H1 (cell line): ENCODE measurements at regions of chr7 and their contacts with region 1.

Region 1: DNA sequence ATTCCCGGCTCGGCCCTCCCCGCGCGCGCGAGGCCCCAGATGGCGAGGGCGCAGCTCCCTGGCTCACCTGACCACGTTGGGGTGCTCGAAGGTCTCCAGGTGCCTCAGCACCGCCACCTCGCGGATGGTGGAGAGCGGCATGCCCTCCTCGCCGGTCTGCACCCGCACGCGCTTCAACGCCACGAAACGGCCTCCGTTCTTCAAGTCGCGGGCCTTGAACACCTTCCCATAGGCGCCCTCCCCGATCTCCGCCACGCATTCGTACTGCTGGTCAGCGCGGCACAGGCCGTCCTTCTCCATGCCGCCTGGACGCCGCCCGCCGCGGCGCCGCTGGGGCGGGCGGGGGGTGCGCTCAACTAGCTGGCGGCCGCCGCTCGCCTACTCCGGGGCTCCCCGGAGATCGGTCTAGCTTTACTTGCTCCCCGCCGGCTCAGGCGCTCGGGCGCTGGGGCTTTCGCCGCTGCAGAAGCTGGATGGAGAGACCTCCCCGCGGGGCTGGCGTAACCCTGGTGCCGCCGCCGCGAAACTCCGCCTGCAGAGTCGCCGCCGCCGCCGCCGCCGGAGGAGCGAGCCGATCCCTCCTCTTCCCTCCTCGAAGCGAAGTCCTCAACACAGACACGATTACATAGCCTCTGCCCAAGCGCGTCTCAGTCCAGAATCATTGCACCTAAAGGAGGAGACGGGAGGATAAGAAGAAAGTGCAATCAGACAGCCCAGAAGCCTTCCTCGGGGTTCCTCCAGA is 3.2 kb downstream of the CDK6 start:
- DNase-seq: peak; percentile 73 to 95
- H3K4me3 ChIP-seq: peak overlapping the region; percentile 38 to 81 (median 58)
- H3K27ac ChIP-seq: no peak overlapping the region
- H3K4me1 ChIP-seq: peaks cover 0 to 5% (median 2%) of the 10 kb centered on the region in 4 experiments; a peak in 2 of 7 replicates
- H3K27me3 ChIP-seq: peaks cover 0 to 12% (median 6%) of the 10 kb centered on the region in 4 experiments; a peak in 5 of 7 replicates
- CTCF ChIP-seq: peak; percentile 92 to 96 (median 92)
- EP300 ChIP-seq: 0 out of 3 replicates have a peak, but pooled peaks of 1 of the 2 experiments have one; percentile 5
- POLR2A ChIP-seq: no peak
- RAD21 ChIP-seq: peak; percentile 83 to 88

Region 2: DNA sequence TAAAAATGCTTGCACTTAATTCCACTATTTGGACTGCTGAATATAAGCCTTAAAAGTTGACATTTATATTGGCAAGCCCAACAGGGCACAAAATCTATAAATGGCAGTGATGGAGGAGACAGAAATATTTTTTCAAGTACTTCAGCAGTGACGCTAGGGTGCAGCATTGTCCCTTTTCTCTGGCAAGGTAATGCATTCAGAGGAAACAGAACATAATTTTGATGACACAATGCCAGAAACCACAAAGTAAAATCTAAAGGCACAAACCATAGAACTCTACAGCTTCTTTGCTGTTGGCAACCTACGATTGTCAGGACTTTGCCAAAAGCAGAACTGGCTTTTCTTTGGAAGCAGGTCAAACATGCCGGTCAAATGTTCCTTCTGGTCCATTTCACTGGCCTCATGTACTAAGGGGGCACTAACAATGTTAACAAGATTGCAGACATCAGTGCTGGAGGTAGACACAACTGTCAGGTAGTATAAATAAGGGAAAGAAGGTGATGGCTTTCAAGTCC is 212.1 kb before region 1 on chr7:
- CTCF ChIA-PET with region 1: interaction called, 23 read pairs
- POLR2A ChIA-PET with region 1: interaction called, 3 read pairs
- DNase-seq: peak in 1 of 2 experiments; percentile 56
- H3K4me3 ChIP-seq: no peak overlapping the region
- H3K27ac ChIP-seq: no peak overlapping the region
- H3K4me1 ChIP-seq: no peaks in the 10 kb centered on the region
- H3K27me3 ChIP-seq: no peaks in the 10 kb centered on the region
- CTCF ChIP-seq: peak in 2 of 3 experiments; percentile 62 to 72; a peak in 3 of 4 replicates
- EP300 ChIP-seq: no peak
- POLR2A ChIP-seq: no peak
- RAD21 ChIP-seq: peak; percentile 88 to 91

Region 3: GRCh38 chr7:92691578-92691977 is 141.6 kb before region 1 on chr7:
- CTCF ChIA-PET with region 1: interaction called, 17 read pairs
- POLR2A ChIA-PET with region 1: interaction called, 8 read pairs
- DNase-seq: no peak
- H3K4me3 ChIP-seq: no peak overlapping the region
- H3K27ac ChIP-seq: no peak overlapping the region
- H3K4me1 ChIP-seq: peaks cover 0 to 6% (median 2%) of the 10 kb centered on the region in 4 experiments; a peak in 3 of 7 replicates
- H3K27me3 ChIP-seq: no peaks in the 10 kb centered on the region; a peak in 2 of 7 replicates
- CTCF ChIP-seq: peak in 2 of 3 experiments; percentile 38 to 50; a peak in 2 of 4 replicates
- EP300 ChIP-seq: no peak
- POLR2A ChIP-seq: no peak
- RAD21 ChIP-seq: peak; percentile 70 to 71

Region 4: DNA sequence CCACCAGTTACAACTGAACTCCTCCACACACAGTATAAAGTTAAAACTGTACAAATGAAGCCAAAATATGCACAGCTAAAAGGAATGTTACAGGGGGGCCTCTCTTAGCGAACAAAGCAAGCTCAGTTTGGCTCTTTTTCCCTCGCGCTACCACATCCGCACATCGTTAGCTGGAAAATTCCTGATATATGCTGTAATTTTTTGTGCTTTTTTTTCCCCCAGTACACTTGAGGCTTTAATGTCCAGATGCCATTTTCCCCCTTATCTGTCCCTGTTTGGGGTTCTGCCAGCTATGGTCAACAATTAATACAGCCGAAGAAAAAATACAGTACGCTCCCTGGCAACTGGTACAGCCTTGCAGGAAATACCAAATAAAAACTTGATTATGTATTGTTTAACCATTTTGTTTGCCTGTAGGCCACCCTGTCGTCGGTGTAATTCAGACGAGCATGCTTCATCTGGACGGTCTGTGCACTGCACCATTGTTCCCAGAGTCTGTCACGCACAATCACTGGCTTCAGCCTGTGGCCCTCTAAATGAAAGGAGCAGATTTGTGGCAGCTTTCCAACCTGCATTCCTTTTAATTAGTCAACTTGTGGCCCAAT is 134.9 kb before region 1 on chr7:
- CTCF ChIA-PET with region 1: interaction called, 17 read pairs
- POLR2A ChIA-PET with region 1: interaction called, 8 read pairs
- DNase-seq: no peak
- H3K4me3 ChIP-seq: no peak overlapping the region
- H3K27ac ChIP-seq: no peak overlapping the region
- H3K4me1 ChIP-seq: peaks cover 0 to 6% (median 2%) of the 10 kb centered on the region in 4 experiments; a peak in 3 of 7 replicates
- H3K27me3 ChIP-seq: no peaks in the 10 kb centered on the region
- CTCF ChIP-seq: no peak
- EP300 ChIP-seq: no peak
- POLR2A ChIP-seq: no peak
- RAD21 ChIP-seq: no peak

Region 5: DNA sequence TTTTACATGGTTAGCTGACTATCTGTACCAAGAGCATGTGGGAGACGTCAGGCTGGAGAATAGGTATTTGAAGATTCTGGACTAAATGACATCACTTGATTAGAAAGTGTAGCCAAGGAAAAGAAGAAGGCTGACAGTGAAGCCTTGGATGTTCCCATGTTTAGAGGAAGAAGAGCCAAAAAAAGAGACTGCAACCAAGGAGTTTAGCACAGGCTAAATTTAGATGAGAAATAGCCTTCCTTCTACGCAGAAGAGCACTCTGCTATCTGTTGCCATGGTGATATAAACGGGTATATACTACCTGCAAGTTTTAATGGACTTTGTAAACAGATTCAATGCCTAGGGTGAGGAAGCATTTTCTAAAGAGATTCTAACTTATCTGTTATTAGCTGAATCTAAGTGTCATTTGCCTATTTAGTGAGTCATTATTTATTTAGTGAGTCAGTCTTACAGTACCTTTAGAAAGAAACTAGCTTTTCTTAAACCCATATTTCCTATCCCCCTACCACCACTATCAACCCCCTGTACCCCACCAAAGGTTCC is 66.7 kb before region 1 on chr7:
- CTCF ChIA-PET with region 1: interaction called, 17 read pairs
- POLR2A ChIA-PET with region 1: interaction called, 4 read pairs
- DNase-seq: no peak
- H3K4me3 ChIP-seq: no peak overlapping the region
- H3K27ac ChIP-seq: no peak overlapping the region
- H3K4me1 ChIP-seq: peaks cover 0 to 39% (median 20%) of the 10 kb centered on the region in 4 experiments; a peak in 4 of 7 replicates
- H3K27me3 ChIP-seq: no peaks in the 10 kb centered on the region
- CTCF ChIP-seq: no peak
- EP300 ChIP-seq: no peak
- POLR2A ChIP-seq: no peak
- RAD21 ChIP-seq: no peak

Region 6: DNA sequence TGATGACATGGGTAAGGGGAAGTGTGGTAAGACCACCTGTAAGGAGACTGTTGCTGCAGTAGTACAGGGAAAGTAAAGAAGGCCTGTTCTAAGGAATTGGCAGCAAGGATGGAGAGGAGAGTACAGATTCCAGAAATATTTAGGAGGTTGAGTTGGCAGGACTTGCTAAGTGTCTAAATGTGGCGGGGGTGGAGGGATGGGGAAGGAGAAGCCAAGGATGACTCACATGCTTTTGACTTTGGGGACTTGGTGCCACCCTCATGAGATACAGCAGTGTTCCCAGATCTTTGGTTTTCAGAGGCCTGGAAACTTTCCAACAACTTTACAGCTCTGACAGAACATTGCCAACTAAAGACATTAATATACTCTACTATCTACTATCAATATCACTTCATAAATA is 42.2 kb before region 1 on chr7:
- CTCF ChIA-PET with region 1: no interaction called
- POLR2A ChIA-PET with region 1: no interaction called
- DNase-seq: no peak
- H3K4me3 ChIP-seq: no peak overlapping the region
- H3K27ac ChIP-seq: no peak overlapping the region
- H3K4me1 ChIP-seq: peaks cover 0 to 3% (median 0%) of the 10 kb centered on the region in 4 experiments; a peak in 1 of 7 replicates
- H3K27me3 ChIP-seq: no peaks in the 10 kb centered on the region
- CTCF ChIP-seq: no peak
- EP300 ChIP-seq: no peak
- POLR2A ChIP-seq: no peak
- RAD21 ChIP-seq: no peak